ENCODE measurements at regions of chr9 and their contacts with region 1.

Region 1: GRCh38 chr9:129177791-129178559 is at the start of gene IER5L:
- DNase-seq: peak; percentile 89 to 97 (median 93)
- ATAC-seq: peak; percentile 94
- H3K4me3 ChIP-seq: peak within 1 kb of the TSS; percentile 86
- H3K4me3 Mint-ChIP-seq: peak within 1 kb of the TSS; percentile 90 to 96 (median 92)
- H3K27ac ChIP-seq: peak within 1 kb of the TSS; percentile 59
- H3K27ac Mint-ChIP-seq: peak within 1 kb of the TSS in 7 of 9 donors; percentile 43 to 81 (median 62)
- H3K4me1 ChIP-seq: peaks cover 0 to 4% of the 10 kb centered on the region in 2 donors
- H3K4me1 Mint-ChIP-seq: peaks cover 0 to 17% (median 5%) of the 10 kb centered on the region in 7 donors
- H3K27me3 ChIP-seq: no peaks in the 10 kb centered on the region
- H3K27me3 Mint-ChIP-seq: peaks cover 0 to 7% (median 0%) of the 10 kb centered on the region in 5 donors
- total RNA-seq, gene IER5L: 3.4 to 6.8 (median 3.8) TPM

Region 2: GRCh38 chr9:128969491-128969890 is 208.5 kb before region 1 on chr9:
- CTCF ChIA-PET with region 1: no interaction called
- POLR2A ChIA-PET with region 1: no interaction called
- intact Hi-C with region 1: no loop called
- DNase-seq: no peak
- ATAC-seq: no peak
- H3K4me3 ChIP-seq: no peak overlapping the region
- H3K4me3 Mint-ChIP-seq: no peak overlapping the region
- H3K27ac ChIP-seq: peak overlapping the region; percentile 17
- H3K27ac Mint-ChIP-seq: no peak overlapping the region
- H3K4me1 ChIP-seq: no peaks in the 10 kb centered on the region
- H3K4me1 Mint-ChIP-seq: peaks cover 0 to 10% (median 0%) of the 10 kb centered on the region in 7 donors
- H3K27me3 ChIP-seq: no peaks in the 10 kb centered on the region
- H3K27me3 Mint-ChIP-seq: no peaks in the 10 kb centered on the region

Region 3: DNA sequence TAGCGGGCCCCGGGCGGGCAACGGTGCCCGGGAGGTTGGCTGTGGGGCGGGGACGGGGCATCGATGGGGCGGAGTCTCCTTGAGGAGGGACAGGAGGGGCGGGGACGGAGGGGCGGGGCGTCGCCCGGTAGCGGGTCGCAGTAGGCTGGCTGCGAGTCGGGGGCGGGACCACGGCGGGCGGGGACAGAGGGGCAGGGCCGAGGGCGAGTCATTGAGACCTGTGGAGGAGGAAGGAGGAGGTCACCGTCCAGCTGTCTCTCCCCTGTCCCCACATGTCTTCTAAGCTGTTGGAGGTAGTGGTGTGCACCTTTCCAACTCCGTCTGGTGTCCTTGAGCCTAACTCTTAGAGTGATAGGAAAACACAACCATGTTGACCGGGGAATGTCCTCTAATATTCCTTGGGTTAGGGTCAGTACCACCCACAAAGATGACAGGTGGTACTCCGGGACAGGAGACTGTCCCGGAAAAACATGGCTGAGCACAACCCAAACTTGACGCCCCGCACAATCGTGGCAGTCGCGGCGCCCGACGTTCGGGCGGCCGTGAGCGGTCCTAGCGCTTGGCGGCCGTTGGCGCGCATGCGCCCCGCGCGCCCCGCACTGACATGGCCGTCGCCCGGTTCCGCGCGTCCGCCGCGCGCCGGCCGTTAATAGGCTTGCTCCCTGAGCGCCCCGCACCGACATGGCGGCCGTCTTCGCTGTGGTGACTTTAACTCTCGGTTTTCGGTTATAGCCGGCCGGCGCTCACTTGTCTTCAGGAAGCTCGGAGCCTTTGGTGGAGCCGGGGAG is 67.0 kb before region 1 on chr9 and contains the starts of genes CRAT and PTPA:
- CTCF ChIA-PET with region 1: no interaction called
- POLR2A ChIA-PET with region 1: no interaction called
- intact Hi-C with region 1: loop called (anchors 1 to 2 kb)
- DNase-seq: peak; percentile 85 to 96 (median 89)
- ATAC-seq: peak; percentile 93
- H3K4me3 ChIP-seq: peak within 1 kb of the TSS; percentile 82
- H3K4me3 Mint-ChIP-seq: peak within 1 kb of the TSS; percentile 88 to 97 (median 92)
- H3K27ac ChIP-seq: peak within 1 kb of the TSS; percentile 87
- H3K27ac Mint-ChIP-seq: peak within 1 kb of the TSS; percentile 83 to 97 (median 94)
- H3K4me1 ChIP-seq: peaks cover 10% of the 10 kb centered on the region in 2 donors
- H3K4me1 Mint-ChIP-seq: peaks cover 26 to 45% (median 29%) of the 10 kb centered on the region in 7 donors
- H3K27me3 ChIP-seq: no peaks in the 10 kb centered on the region
- H3K27me3 Mint-ChIP-seq: no peaks in the 10 kb centered on the region
- total RNA-seq, gene CRAT: 7.2 to 15.6 (median 11.4) TPM
- total RNA-seq, gene PTPA: 45.0 to 110 (median 52.3) TPM

Region 4: DNA sequence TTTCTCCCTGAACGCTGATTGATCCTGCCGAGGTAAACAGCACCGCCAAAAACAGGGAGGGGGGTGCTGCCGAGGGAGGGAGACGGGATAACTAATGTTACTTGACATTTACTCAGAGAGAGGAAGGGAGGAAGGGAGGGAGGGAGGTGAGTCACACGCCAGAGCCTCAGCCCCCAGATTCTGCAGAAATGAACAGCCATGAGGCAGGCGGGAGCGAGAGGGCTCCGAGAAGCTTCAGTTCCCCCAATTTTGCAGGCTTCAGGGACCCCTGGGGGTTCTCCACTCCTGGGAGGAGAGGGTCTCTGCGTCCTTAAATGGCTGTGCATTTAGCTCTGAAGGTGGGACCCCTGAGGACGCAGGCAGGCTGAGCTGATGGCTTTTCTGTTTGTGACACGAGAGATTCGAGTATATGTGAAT is 59.2 kb after region 1 on chr9:
- CTCF ChIA-PET with region 1: interaction called, 4 read pairs
- POLR2A ChIA-PET with region 1: interaction called, 119 read pairs
- intact Hi-C with region 1: loop called (anchors 1 to 2 kb)
- DNase-seq: peak in 8 of 9 donors; percentile 12 to 61 (median 38)
- ATAC-seq: peak; percentile 45
- H3K4me3 ChIP-seq: peak overlapping the region; percentile 66
- H3K4me3 Mint-ChIP-seq: peak overlapping the region; percentile 87 to 97 (median 92)
- H3K27ac ChIP-seq: peak overlapping the region; percentile 77
- H3K27ac Mint-ChIP-seq: peak overlapping the region; percentile 85 to 98 (median 95)
- H3K4me1 ChIP-seq: peaks cover 35 to 36% of the 10 kb centered on the region in 2 donors
- H3K4me1 Mint-ChIP-seq: peaks cover 38 to 77% (median 71%) of the 10 kb centered on the region in 7 donors
- H3K27me3 ChIP-seq: no peaks in the 10 kb centered on the region
- H3K27me3 Mint-ChIP-seq: no peaks in the 10 kb centered on the region

Region 5: DNA sequence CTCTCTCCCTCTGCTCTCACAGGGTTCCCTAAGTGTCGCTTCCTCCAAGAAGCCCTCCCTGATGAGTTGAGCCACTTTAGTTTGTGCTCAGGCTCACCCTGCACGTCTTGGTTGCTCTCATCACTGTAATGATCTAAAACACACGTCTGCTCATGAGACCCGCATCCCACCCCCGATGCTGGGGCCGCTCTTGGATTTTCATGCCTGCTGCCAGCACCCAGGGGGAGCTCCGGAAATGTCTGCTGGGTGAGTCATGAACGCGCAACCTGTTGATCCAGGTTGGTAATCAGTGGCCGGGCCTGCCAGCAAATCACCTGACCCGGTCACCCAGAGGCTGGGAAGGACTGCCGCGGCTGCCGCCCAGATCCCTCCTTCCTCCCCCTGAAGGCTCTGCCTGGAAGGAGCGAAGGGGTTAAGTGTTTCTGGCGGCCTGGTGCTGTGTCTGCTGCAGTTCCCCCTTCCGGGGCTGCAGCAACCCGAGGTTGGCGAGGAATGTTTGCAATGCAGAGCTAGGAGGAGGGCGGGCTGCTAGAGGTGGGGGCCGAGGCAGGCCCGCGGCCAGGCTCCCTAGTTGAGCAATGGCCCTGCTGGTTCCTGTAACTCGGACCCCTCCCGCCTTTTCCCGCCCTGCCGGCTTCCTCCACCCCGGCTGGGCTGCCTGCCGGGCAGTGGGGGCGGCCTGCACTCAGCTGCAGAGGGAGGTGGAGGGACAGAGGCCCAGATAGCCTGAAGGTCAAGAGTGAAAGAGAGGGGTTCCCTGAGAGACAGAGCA is 156.2 kb after region 1 on chr9:
- CTCF ChIA-PET with region 1: no interaction called
- POLR2A ChIA-PET with region 1: interaction called, 3 read pairs
- intact Hi-C with region 1: loop called in 1 of 2 experiments (anchors 5 kb)
- DNase-seq: peak in 4 of 9 donors; percentile 28 to 36 (median 32)
- ATAC-seq: peak; percentile 67
- H3K4me3 ChIP-seq: no peak overlapping the region
- H3K4me3 Mint-ChIP-seq: peak overlapping the region; percentile 3 to 88 (median 78)
- H3K27ac ChIP-seq: peak overlapping the region; percentile 38
- H3K27ac Mint-ChIP-seq: peak overlapping the region; percentile 29 to 91 (median 83)
- H3K4me1 ChIP-seq: peaks cover 3 to 28% of the 10 kb centered on the region in 2 donors
- H3K4me1 Mint-ChIP-seq: peaks cover 17 to 41% (median 25%) of the 10 kb centered on the region in 7 donors
- H3K27me3 ChIP-seq: no peaks in the 10 kb centered on the region
- H3K27me3 Mint-ChIP-seq: peaks cover 0 to 8% (median 0%) of the 10 kb centered on the region in 5 donors

Region 6: GRCh38 chr9:129460323-129461261 is 282.6 kb after region 1 on chr9:
- CTCF ChIA-PET with region 1: no interaction called
- POLR2A ChIA-PET with region 1: interaction called, 4 read pairs
- intact Hi-C with region 1: loop called in 1 of 2 experiments (anchors 1 kb)
- DNase-seq: peak; percentile 42 to 86 (median 64)
- ATAC-seq: peak; percentile 86
- H3K4me3 ChIP-seq: peak overlapping the region; percentile 25
- H3K4me3 Mint-ChIP-seq: peak overlapping the region; percentile 67 to 89 (median 80)
- H3K27ac ChIP-seq: peak overlapping the region; percentile 68
- H3K27ac Mint-ChIP-seq: peak overlapping the region in 8 of 9 donors; percentile 51 to 96 (median 78)
- H3K4me1 ChIP-seq: peaks cover 32 to 35% of the 10 kb centered on the region in 2 donors
- H3K4me1 Mint-ChIP-seq: peaks cover 16 to 46% (median 41%) of the 10 kb centered on the region in 7 donors
- H3K27me3 ChIP-seq: no peaks in the 10 kb centered on the region
- H3K27me3 Mint-ChIP-seq: peaks cover 0 to 9% (median 0%) of the 10 kb centered on the region in 5 donors

Region 7: GRCh38 chr9:129626079-129626624 is 448.2 kb after region 1 on chr9 and contains the start of gene NTMT1:
- CTCF ChIA-PET with region 1: interaction called, 4 read pairs
- POLR2A ChIA-PET with region 1: interaction called, 15 read pairs
- intact Hi-C with region 1: loop called (anchors 1 to 2 kb)
- DNase-seq: peak; percentile 88 to 94 (median 90)
- ATAC-seq: peak; percentile 93
- H3K4me3 ChIP-seq: peak within 1 kb of the TSS; percentile 85
- H3K4me3 Mint-ChIP-seq: peak within 1 kb of the TSS; percentile 85 to 95 (median 88)
- H3K27ac ChIP-seq: peak within 1 kb of the TSS; percentile 89
- H3K27ac Mint-ChIP-seq: peak within 1 kb of the TSS; percentile 88 to 99 (median 94)
- H3K4me1 ChIP-seq: peaks cover 27 to 42% of the 10 kb centered on the region in 2 donors
- H3K4me1 Mint-ChIP-seq: peaks cover 33 to 63% (median 59%) of the 10 kb centered on the region in 7 donors
- H3K27me3 ChIP-seq: no peaks in the 10 kb centered on the region
- H3K27me3 Mint-ChIP-seq: peaks cover 4 to 18% (median 7%) of the 10 kb centered on the region in 5 donors
- total RNA-seq, gene NTMT1: 31.0 to 50.1 (median 34.2) TPM

Measured in naive thymus-derived CD4-positive, alpha-beta T cell (primary cell).